GM10248 (cell line): ENCODE measurements at regions of chr13 and their contacts with region 1.

Region 1: DNA sequence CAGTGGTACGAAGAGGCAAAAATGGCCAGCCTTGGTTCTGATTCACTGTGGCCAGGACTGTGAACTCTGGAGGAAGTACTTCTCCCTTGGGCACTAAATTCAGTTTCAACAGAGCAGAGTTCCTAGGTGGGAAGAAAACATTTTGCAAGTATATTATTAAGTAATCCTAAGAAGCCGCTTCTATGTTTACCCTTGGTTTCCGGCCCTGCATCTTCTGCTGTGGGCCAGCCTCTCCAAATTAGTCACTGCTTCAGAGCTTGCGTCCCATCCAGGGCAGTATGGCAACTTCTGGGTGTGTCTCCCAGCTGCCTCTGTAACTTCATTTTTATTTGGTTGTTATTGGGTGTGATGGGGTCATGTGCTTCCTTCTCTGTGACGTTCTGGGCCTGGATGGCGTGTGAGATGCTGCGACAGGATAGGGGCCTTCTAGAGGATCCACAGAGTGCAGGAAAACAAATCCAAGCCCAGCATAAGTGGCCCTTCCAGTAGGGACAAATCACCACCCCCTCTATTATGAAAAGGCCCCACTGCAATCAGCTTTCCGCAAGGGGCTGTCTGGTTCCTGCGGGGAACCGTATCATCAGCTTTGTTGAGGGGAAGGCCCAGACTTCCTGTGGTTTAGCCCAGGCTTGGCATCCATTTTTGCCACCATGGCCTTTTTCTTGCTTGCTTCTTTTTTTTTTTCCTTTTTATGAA is 55.1 kb upstream of the C1QTNF9 start:
- DNase-seq: peak; percentile 37
- CTCF ChIP-seq: no peak

Region 2: DNA sequence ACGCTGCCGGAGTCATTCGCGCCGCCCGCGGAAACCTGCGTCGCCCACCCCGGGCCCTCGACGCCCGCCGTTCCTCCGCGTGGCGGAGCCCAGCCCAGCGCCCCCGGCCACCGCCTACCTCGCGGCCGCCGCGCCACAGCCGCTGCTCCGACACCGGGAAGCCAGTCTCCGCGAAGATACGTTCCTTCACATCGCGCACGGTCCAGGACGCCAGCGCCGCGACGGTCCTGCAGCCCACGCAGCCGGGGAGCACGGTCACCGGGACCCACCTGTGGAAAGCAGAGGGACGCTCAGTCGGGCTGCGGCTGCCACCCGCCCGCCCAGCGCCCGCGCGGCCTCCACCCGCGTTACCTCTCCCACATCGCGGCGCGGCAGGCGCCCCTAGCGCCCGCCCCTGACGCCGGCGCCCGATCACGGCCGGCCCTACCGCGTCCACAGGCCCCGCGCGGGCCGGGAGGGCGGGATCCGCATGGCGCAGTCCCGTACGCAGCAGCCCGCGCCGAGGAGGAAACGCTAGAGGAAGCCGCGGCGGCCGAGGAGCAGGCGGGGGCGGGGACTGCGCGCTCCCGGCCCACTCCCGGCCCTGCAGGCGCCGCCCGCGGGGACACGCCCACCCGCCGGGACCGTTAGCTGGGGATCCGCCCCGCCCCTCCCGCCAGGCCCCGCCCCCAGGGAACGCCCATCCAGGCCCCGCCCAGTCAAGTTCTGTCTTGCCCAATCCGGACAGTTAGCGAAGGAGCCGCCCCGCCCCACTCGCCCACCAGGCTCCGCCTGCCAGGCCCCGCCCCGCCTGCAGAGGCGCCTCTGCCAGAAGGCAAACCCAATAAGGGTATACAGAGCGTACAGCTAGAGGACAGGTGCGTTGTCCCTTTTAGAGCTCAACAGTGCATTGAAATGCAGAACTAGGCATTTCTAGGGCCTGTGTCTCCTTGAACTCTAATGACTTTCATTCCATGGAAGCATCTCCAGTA is 879.0 kb before region 1 on chr13:
- CTCF ChIA-PET with region 1: no interaction called
- POLR2A ChIA-PET with region 1: no interaction called
- DNase-seq: peak; percentile 99
- CTCF ChIP-seq: peak; percentile 10

Region 3: DNA sequence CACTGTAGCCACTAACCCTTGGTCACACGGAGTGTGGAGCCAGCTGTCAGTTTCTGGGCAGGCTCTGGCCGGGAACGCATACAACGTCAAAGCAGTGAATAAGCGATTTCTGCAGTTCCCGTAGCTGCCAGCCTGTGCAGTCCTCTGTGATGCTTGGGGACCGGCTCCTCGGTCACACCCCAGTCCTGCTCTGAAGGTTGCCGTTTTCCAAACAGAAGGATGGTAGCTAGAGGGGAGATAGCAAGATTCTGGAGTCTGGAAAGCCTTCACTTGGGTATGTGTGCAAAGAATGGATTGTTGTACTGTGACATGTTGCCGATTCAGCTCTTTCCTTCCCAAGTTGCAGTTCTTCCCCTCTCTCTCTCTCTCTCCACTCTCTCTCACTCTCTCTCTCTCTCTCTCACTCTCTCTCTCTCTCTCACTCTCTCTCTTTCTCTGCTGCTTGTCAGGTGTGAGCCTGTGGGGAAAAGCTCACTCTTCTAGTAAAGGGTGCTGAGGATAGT is 16.4 kb after region 1 on chr13:
- CTCF ChIA-PET with region 1: interaction called, 11 read pairs
- POLR2A ChIA-PET with region 1: no interaction called
- DNase-seq: peak; percentile 66
- CTCF ChIP-seq: no peak

Region 4: DNA sequence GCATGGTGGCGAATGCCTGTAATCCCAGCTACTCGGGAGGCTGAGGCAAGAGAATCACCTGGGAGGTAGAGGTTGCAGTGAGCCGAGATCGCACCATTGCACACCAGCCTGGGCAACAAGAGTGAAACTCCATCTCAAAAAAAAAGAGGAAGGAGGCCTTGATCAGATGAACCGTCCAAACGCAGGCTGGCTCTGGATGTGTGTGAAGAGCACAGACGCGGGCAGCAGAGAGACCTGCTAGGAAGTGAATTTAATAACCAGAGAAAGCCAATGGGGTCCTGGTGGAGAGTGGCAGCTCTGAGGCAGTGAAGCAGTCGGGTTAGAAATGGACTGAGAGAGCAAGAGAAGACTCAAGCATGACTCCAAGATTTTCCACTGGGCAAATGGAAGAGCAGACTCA is 646.2 kb after region 1 on chr13:
- CTCF ChIA-PET with region 1: no interaction called
- POLR2A ChIA-PET with region 1: no interaction called
- DNase-seq: no peak
- CTCF ChIP-seq: no peak